Psoas muscle (tissue), 8 donors: ENCODE measurements at regions of chr12 and their contacts with region 1.

Region 1: DNA sequence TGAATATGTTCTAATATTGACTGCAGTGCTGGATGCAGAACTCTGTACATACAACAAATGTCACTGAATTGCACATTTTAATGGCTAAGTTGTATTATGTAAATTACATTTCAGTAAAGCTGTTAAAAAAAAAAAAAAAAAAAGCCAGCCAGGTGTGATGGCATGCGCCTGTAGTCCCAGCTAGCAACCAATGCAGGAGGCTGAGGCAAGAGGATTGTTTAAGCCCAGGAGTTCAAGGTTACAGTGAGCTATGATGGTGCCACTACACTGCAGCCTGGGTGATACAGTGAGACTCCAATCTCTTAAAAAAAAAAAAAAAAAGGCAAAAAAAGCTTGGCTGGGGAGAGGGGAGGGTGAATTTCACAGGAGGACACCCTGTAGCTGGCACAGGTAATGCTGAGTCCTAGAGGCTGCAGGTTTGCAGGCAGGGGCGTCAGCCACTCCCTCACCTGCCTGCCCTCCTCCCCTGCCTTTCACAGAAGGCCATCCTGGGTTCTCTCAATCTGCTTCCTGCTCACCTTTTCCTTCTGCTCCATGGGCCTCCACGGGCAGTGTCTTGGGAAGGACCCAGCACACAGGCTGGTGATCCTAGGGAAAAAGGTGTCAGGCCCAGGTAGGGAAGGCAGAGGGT is 40.7 kb downstream of the TESC start:
- DNase-seq: no peak
- ATAC-seq: no peak
- H3K4me3 ChIP-seq: no peak overlapping the region
- H3K27ac ChIP-seq: no peak overlapping the region
- H3K4me1 ChIP-seq: no peaks in the 10 kb centered on the region
- H3K27me3 ChIP-seq: peaks cover 0 to 6% (median 4%) of the 10 kb centered on the region in 3 donors
- CTCF ChIP-seq: no peak

Region 2: GRCh38 chr12:117031843-117032592 is 26.5 kb before region 1 on chr12:
- intact Hi-C with region 1: loop called in 1 of 2 experiments (anchors 1 kb)
- DNase-seq: no peak
- ATAC-seq: no peak
- H3K4me3 ChIP-seq: no peak overlapping the region
- H3K27ac ChIP-seq: no peak overlapping the region
- H3K4me1 ChIP-seq: peaks cover 7% of the 10 kb centered on the region
- H3K27me3 ChIP-seq: peaks cover 0 to 3% (median 2%) of the 10 kb centered on the region in 3 donors
- CTCF ChIP-seq: no peak

Region 3: DNA sequence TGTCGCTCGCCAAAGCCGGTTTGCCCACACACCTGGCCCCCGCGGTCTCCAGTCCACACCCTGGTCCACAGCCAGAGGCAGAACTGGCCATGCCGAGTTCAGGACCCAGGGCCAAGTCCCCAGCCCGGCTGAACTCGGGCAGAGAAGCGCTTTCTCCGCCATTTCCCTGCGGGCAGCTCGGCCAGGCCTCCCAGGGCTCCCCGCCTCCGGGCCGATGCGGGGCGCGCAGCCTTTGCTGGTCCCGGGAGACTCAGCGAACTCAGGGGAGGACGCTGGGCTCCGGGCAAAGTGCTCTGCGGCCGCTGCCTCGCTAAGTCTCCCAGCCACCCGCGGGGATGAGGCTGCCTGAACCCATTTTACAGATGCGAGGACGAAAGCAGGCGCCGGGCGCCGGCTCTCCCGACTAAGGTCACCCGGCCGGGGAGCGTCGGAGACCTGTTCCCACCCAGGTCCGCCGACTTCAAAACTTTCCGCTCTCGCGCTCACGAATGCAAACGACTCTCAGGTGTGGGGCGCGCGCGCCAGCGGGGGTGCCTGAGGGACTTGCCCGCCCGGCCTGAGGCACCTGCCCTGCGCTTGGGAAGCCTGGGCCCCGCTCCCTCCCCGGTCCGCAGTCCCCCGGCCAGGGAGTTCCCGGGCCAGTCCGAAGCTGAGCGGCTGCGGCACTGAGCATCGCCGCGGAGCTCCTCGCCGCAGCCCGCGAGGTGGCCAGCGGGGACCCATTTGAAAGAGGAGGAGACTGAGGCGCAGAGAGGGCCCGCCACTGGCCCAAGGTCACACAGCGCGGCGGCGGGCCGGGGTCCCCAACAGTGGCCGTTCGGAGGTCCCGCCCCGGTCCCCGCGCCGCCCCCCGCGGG is 40.0 kb after region 1 on chr12:
- intact Hi-C with region 1: no loop called
- DNase-seq: no peak
- ATAC-seq: peak in 1 of 4 donors; percentile 28
- H3K4me3 ChIP-seq: peak overlapping the region; percentile 73
- H3K27ac ChIP-seq: no peak overlapping the region
- H3K4me1 ChIP-seq: peaks cover 8% of the 10 kb centered on the region
- H3K27me3 ChIP-seq: peaks cover 0 to 79% (median 17%) of the 10 kb centered on the region in 3 donors
- CTCF ChIP-seq: no peak

Region 4: DNA sequence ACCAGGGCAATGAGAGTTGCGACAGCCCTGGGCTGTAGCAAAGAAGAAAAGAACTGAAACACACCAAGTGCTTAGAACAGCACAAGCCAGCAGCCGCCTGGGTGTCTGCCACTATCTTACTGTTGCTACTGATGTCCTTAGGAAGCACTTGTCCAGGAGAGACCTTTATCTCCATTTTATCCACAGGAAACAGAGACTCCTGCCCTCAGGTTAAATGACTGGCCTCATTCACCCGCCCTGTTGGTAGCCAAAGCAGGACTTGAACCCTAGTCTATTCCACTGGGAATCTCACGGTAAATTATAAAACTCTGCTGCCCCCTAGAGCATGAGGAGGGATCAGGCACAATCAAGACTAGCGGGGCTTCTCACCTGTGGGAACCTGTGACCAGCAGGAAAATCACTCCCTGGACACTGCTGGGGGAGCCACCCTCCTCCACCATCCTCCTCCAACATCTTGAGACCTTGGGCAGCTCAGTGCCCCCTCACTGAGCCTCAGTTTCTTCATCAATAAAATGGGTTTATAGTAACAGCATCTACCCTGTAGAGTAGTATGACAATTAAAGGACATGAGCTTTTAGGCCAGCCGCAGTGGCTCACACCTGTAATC is 61.1 kb after region 1 on chr12:
- intact Hi-C with region 1: no loop called
- DNase-seq: peak; percentile 37 to 71
- ATAC-seq: peak in 2 of 4 donors; percentile 41 to 61
- H3K4me3 ChIP-seq: no peak overlapping the region
- H3K27ac ChIP-seq: no peak overlapping the region
- H3K4me1 ChIP-seq: no peaks in the 10 kb centered on the region
- H3K27me3 ChIP-seq: no peaks in the 10 kb centered on the region
- CTCF ChIP-seq: peak; percentile 50

Region 5: DNA sequence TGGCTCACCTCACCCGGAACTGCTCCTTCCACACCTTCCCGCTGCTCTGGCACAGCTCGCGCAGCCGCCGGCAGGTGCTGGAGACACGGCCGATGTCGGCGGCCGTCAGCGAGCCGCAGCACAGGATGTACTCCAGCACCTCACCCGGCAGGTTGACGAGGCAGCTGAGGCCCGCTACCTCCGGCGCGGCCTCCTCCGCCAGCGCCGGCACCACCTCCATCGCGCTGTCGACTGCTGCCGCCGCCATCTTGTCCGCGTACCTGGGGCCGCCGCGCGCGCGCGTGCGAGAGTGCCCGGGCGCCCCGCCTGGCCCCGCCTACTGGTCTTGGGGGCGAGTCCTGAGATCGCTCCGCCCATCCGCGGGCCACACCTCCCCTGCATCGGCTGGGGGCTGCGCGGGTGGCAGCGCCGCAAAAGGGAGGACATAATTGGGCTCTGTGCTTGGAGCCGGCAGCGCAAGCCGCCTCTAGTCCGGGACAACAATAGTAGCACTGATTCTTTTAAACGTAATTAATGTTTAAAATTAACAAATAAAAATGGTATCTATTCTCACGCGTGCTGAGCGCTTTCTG is 131.7 kb after region 1 on chr12 and contains the start of gene FBXO21:
- intact Hi-C with region 1: no loop called
- DNase-seq: peak; percentile 90 to 95
- ATAC-seq: peak; percentile 99
- H3K4me3 ChIP-seq: peak within 1 kb of the TSS; percentile 90
- H3K27ac ChIP-seq: peak within 1 kb of the TSS; percentile 80
- H3K4me1 ChIP-seq: peaks cover 9% of the 10 kb centered on the region
- H3K27me3 ChIP-seq: no peaks in the 10 kb centered on the region
- CTCF ChIP-seq: no peak
- total RNA-seq, gene FBXO21: 19.4 to 38.8 (median 25.1) TPM